GM18951 (cell line): ENCODE measurements at regions of chr16 and their contacts with region 1.

Region 1: DNA sequence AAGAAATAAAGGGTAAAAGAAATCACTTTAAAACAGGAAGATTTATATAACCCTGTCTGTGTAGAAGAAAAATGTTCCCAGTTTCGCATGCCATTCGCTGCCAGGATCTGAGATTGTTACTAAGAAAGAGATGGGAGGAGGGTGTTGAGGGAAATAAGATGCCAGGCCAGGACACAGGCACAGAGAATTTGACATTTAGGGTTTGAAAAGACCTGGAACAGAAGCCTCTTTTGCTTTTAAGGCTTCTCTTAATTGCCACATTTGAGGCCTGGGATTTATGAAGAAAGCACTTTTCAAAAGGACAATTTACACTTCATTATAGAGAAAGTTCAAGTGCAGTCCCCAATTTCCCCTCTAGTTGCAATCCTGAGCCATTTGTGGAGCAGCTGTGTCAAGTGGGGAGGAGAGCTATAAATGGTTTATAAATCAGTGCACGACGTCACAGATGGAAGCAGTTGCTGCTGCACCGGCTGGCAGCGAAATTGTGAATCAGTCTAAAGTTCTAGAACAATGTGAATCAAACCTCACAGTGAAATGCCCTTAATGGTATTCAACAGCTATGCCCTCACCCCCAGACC is 26.5 kb upstream of the C16orf87 start:
- POLR2A ChIP-seq: no peak

Region 2: GRCh38 chr16:46889942-46890300 is 32.5 kb after region 1 on chr16:
- in situ Hi-C with region 1: loop called (anchors 5 kb)
- POLR2A ChIP-seq: no peak

Region 3: DNA sequence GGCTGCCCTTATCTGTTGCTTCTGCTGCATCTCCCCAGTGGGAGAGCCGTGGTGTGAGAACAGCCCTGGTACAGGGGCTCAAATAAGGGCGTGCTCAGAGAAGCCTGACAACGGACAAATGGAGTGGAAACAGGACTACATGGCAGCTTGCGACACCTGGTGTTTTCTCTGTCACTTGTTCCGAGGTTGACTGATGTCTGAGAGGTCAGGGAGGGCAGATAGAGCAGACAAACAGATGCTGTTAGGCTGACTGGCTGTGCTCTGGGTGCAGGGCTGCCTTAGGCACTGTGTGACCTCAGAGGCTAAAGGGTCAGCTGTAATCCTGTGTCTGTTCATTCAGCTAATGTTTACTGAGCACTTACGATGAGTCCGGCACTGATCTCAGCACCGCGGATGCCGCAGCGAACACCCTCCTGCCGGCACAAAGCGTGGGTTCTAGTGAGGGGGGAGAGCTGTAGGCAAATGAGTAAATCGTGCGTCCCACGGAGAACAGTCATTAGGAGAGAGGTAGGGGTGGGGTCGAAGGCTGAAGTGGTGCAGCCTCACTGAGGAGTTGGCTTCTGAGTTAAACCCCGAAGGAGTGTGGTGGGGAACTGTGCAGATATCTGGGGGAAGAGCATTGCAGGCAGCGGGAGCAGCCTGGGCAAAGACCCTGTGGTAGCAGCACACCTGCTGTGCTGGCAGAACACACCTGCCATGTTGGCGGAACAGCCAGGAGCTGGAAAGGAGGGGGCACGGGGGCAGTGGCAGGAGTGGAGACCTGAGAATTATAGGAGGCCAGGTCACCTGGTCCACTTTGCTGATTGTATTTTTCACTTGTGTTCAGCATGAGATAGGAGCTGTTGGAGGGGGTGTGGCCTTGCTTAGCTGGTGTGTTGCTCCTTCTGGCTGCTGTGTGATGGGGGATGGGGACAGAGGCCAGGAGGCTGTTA is 61.7 kb after region 1 on chr16:
- in situ Hi-C with region 1: loop called (anchors 5 kb)
- POLR2A ChIP-seq: no peak

Region 4: DNA sequence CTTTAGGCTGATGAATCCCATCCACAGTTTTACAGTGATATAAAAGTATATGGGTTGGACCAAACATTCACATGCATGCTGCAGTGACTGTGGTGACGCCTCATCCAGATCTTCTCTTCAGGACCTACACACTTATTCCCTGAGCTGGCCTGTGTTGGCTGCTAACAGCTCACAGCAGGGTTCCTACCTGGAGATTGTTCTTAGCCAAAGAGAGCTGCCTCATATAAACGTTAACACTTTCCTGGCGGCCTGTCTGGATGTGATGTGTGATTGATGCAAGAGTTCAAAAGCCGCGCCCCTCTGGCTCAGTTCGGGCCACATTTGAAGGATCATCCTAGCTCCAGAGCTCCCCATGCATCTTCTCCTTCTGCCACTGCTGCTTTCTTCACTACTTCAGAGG is 379.3 kb after region 1 on chr16:
- in situ Hi-C with region 1: no loop called
- POLR2A ChIP-seq: no peak